Activated CD4-positive, alpha-beta T cell treated with anti-CD3 and anti-CD28 coated beads for 36 hours (primary cell): ENCODE measurements at regions of chr6 and their contacts with region 1.

Region 1: DNA sequence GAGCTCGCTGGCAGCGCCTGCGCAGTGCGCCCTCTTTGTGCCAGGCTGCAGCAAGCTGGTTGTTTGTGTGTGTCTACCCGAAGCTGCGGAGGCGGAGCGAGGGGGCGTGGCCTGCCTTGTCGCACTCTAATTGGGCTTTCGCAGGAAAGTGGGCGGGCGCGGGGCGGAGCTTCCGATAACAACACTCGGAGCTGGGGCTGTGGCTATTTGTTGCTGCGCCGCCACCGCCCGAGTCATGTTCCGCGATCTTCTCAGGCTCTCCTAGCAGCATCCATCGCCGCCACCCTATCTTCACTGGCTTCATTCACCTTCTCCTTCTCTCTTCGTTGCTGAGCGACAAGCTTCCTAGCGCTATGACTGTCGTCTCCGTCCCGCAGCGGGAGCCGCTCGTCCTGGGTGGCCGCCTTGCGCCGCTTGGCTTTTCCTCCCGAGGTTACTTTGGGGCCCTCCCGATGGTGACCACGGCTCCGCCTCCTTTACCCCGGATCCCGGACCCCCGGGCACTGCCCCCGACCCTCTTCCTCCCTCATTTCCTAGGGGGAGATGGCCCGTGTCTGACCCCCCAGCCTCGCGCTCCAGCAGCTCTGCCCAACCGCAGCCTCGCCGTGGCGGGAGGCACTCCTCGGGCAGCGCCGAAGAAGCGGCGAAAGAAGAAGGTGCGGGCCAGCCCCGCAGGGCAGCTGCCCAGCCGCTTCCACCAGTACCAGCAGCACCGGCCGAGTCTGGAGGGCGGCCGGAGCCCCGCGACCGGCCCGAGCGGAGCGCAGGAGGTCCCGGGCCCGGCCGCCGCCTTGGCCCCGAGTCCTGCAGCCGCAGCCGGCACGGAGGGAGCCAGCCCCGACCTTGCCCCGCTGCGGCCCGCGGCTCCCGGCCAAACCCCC is at the start of gene PNRC1:
- DNase-seq: peak; percentile 100
- ATAC-seq: peak; percentile 72
- H3K4me3 Mint-ChIP-seq: peak within 1 kb of the TSS; percentile 94
- H3K27ac Mint-ChIP-seq: peak within 1 kb of the TSS; percentile 100
- H3K4me1 Mint-ChIP-seq: peaks cover 28% of the 10 kb centered on the region
- H3K27me3 Mint-ChIP-seq: no peaks in the 10 kb centered on the region
- total RNA-seq, gene PNRC1: 85.6 to 93.7 TPM

Region 2: DNA sequence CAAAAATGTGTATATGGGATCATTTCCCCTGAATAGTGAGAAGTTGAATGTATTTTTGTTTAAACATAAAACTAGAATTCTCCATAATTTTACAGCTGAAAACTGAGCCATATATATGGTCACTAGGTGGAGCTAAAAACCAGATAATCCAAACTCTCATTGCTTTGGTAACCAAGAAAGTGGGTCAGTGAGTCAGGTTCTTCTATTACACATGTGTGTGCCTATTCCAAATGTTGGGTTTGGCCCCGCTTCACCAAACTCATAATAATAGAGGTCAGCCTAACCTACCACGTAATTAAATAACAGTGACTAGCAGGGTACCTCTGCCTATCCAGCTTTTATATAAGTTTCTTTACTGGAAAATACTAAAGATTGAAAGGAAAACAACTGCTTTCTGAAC is 98.1 kb before region 1 on chr6:
- CTCF ChIA-PET with region 1: interaction called, 19 read pairs
- POLR2A ChIA-PET with region 1: interaction called, 4 read pairs
- intact Hi-C with region 1: loop called (anchors 1 kb)
- DNase-seq: peak; percentile 45
- ATAC-seq: peak; percentile 96
- H3K4me3 Mint-ChIP-seq: no peak overlapping the region
- H3K27ac Mint-ChIP-seq: no peak overlapping the region
- H3K4me1 Mint-ChIP-seq: no peaks in the 10 kb centered on the region
- H3K27me3 Mint-ChIP-seq: peaks cover 3% of the 10 kb centered on the region

Region 3: DNA sequence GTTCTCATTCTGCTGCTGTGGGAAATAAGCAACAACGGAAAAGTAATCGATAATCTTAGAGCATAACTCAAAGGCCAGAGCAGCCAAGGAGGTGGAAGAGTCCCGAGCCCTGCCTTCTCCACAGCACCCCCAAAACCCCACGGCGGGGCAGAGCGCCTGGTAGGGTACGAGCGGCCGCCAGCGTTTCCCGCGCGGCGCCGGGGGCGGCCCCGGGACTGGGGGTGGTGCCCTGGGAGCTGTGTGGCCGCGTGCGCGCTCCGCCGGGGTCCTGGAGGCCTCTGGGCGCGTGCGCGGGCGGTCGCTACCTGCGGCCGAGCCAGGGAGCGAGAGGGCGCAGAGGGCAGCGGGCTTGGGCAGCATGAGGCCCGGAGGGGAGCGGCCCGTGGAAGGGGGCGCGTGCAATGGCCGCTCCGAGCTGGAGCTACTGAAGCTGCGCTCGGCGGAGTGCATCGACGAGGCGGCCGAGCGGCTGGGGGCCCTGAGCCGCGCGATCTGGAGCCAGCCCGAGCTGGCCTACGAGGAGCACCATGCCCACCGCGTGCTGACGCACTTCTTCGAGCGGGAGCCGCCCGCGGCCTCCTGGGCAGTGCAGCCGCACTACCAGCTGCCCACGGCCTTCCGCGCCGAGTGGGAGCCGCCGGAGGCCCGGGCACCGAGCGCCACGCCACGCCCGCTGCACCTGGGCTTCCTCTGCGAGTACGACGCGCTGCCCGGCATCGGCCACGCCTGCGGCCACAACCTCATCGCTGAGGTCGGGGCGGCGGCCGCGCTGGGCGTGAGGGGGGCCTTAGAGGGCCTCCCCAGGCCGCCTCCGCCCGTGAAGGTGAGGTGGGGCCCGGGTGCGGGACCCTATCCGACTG is 65.2 kb after region 1 on chr6 and contains the start of gene PM20D2:
- CTCF ChIA-PET with region 1: interaction called, 5 read pairs
- POLR2A ChIA-PET with region 1: interaction called, 20 read pairs
- intact Hi-C with region 1: loop called (anchors 1 kb)
- DNase-seq: peak; percentile 79
- ATAC-seq: peak; percentile 70
- H3K4me3 Mint-ChIP-seq: peak within 1 kb of the TSS; percentile 80
- H3K27ac Mint-ChIP-seq: peak within 1 kb of the TSS; percentile 97
- H3K4me1 Mint-ChIP-seq: peaks cover 38% of the 10 kb centered on the region
- H3K27me3 Mint-ChIP-seq: no peaks in the 10 kb centered on the region
- total RNA-seq, gene PM20D2: 14.1 to 17.4 TPM

Region 4: GRCh38 chr6:89360415-89360999 is 279.7 kb after region 1 on chr6:
- CTCF ChIA-PET with region 1: interaction called, 4 read pairs
- POLR2A ChIA-PET with region 1: interaction called, 3 read pairs
- intact Hi-C with region 1: loop called in 1 of 2 experiments (anchors 2 kb)
- DNase-seq: no peak
- ATAC-seq: peak; percentile 87
- H3K4me3 Mint-ChIP-seq: no peak overlapping the region
- H3K27ac Mint-ChIP-seq: peak overlapping the region; percentile 53
- H3K4me1 Mint-ChIP-seq: peaks cover 62% of the 10 kb centered on the region
- H3K27me3 Mint-ChIP-seq: no peaks in the 10 kb centered on the region

Region 5: DNA sequence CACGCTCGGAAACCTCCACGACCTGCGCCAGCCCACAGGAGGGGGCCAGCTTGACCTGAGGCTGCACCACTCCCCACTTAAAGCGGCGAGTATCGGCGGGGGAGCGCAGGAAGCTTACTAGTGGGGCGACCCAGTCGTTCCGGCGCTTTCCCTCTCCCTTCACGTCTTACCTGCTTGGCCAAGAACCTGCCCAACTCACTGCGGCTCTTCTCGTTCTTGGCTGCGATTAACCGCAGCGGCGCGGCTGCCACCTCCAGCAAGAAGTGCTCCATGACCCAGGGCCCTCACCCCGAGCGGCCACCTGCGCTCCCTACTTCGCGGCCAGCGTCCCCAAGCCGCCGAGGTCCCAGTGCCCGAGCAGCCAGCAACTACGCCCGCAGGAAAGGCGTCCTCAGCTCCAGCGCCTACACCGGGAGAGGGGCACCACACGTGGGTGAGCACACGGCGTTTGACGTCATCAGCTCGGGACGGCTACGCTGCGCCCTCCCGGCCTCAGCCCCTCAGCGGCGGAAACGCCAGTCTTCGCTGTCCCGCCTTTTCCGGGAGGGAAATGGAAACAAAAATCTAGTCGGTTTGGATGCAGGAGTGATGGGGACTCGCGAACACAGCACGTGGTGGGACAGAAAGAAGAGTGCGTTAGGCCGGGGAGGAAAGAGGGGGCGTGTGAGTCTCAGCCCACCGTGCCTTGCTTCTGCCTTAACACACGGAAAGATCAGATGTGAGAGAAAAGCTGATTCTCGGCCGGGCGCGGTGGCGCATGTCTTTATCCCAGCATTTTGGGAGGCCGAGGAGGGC is 738.8 kb after region 1 on chr6 and contains the start of gene MDN1:
- CTCF ChIA-PET with region 1: no interaction called
- POLR2A ChIA-PET with region 1: interaction called, 4 read pairs
- intact Hi-C with region 1: loop called (anchors 2 to 5 kb)
- DNase-seq: peak; percentile 94
- ATAC-seq: peak; percentile 94
- H3K4me3 Mint-ChIP-seq: peak within 1 kb of the TSS; percentile 81
- H3K27ac Mint-ChIP-seq: peak within 1 kb of the TSS; percentile 96
- H3K4me1 Mint-ChIP-seq: peaks cover 22% of the 10 kb centered on the region
- H3K27me3 Mint-ChIP-seq: no peaks in the 10 kb centered on the region
- total RNA-seq, gene MDN1: 48.6 to 59.5 TPM